Activated naive CD8-positive, alpha-beta T cell treated with anti-CD3 and anti-CD28 coated beads, Interleukin-2, amount 10 ng/mL, durations not matched to agents 7 days and 5 days (primary cell): ENCODE measurements at regions of chr20 and their contacts with region 1.

Region 1: GRCh38 chr20:49278036-49278817 is at the start of gene ZNFX1:
- DNase-seq: peak; percentile 97
- ATAC-seq: peak; percentile 88
- H3K4me3 Mint-ChIP-seq: peak within 1 kb of the TSS; percentile 99
- H3K27ac Mint-ChIP-seq: peak within 1 kb of the TSS; percentile 99
- H3K4me1 Mint-ChIP-seq: peaks cover 50% of the 10 kb centered on the region
- H3K27me3 Mint-ChIP-seq: no peaks in the 10 kb centered on the region
- total RNA-seq, gene ZNFX1: 64.2 to 66.6 TPM

Region 2: GRCh38 chr20:49262444-49262843 is 15.8 kb before region 1 on chr20:
- POLR2A ChIA-PET with region 1: interaction called, 15 read pairs
- DNase-seq: no peak
- ATAC-seq: no peak
- H3K4me3 Mint-ChIP-seq: no peak overlapping the region
- H3K27ac Mint-ChIP-seq: no peak overlapping the region
- H3K4me1 Mint-ChIP-seq: peaks cover 18% of the 10 kb centered on the region
- H3K27me3 Mint-ChIP-seq: no peaks in the 10 kb centered on the region

Region 3: GRCh38 chr20:49318430-49319207 is 40.4 kb after region 1 on chr20:
- POLR2A ChIA-PET with region 1: interaction called, 10 read pairs
- DNase-seq: peak; percentile 55
- ATAC-seq: peak; percentile 56
- H3K4me3 Mint-ChIP-seq: peak overlapping the region; percentile 91
- H3K27ac Mint-ChIP-seq: no peak overlapping the region
- H3K4me1 Mint-ChIP-seq: peaks cover 12% of the 10 kb centered on the region
- H3K27me3 Mint-ChIP-seq: peaks cover 66% of the 10 kb centered on the region